Sciatic nerve (tissue), 2 donors: ENCODE measurements at regions of chr10 and their contacts with region 1.

Region 1: DNA sequence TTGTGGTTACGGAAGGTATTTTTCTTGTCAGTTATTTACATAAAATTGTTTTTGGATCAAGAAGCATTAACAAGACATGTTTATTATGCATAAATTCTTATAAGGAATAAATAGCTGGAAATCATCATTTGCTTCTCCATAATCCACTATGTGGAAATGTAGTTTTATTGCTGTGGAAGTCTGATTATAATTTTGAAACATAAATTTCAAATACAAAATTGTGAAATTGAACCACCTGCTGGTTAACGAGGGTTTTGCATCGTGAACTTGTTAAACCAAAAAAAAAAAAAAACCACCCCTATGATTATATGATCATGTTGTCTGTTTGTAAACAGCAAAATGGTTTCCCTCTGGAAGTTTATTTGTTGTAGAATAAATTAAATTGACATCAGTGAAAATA is 25.9 kb downstream of the ABRAXAS2 start:
- DNase-seq: no peak
- ATAC-seq: no peak

Region 2: DNA sequence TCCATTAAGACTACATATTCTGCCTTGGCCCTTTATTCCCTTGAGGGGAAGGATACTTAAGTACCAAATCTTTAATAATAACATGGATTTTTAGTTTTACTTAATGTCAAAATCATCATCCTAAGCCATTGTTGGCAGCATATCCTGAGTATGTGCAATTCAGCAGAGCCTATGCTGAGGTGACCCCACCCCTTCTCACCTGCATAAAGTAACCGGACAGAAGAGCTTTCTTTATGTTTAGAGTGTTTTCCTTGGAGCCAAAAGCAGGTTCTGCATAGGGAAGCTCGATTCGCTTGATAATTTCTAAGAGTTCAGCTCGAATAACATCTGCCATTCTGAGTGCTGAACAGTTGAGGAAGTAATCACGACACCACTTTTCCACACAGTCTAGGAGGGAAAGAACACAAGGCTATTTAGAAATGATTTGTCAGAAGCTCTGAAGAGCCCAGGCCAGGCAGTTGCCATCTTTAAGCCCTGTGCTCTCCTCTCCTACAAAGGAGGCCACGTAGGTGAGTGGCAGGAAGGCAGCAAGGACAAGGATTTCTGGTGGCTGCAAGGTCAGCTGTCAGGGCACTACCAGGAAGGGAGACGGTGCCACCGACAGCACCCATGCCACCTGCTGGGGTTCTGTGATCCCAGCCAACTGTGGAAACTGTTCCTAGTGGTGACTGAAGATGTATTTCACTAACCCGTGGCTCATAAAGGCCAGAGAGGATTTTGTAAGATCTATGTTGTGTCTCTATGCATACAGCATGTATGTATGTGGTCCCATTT is 1011.5 kb after region 1 on chr10:
- intact Hi-C with region 1: loop called (anchors 10 kb)
- DNase-seq: no peak
- ATAC-seq: no peak

Region 3: GRCh38 chr10:126712681-126713080 is 1885.2 kb after region 1 on chr10:
- intact Hi-C with region 1: no loop called
- DNase-seq: no peak
- ATAC-seq: no peak